GM12878 (cell line): ENCODE measurements at regions of chr1 and their contacts with region 1.

Region 1: GRCh38 chr1:11645670-11646265 is 8.5 kb downstream of the FBXO2 start:
- DNase-seq: no peak
- ATAC-seq: peak; percentile 79
- H3K4me3 ChIP-seq: no peak overlapping the region
- H3K27ac ChIP-seq: no peak overlapping the region
- H3K4me1 ChIP-seq: no peaks in the 10 kb centered on the region
- H3K27me3 ChIP-seq: no peaks in the 10 kb centered on the region; a peak in 2 of 4 replicates
- CTCF ChIP-seq: peak; percentile 73 to 85 (median 78)
- EP300 ChIP-seq: no peak
- POLR2A ChIP-seq: no peak
- RAD21 ChIP-seq: peak; percentile 73

Region 2: DNA sequence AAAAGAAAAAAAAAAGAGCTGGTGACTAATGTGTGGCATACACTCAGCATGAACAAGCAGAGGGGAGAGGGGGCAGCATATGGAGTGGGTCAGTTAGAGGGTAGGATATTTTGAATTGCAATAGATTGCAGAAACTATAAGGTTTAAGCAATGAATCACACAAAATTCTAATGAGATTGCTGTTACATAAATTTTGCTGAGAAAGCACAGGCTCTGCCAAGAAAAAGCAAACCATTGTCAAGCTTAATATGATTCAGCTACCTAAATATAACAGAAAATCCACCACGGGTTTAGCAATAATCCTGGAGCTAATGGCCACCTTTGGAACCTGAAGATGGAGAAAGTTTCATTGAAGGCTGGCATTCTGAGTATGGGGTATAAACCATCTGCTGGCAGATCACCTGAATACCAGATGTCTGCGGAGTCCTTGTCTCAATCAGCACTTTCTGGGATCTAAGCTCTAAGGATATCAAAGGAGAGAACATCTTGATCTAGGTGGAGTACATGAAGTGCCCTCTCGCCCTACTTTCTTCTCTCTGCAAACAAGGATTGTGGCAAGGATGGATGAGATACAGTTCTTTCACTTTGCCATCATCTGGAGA is 486.9 kb before region 1 on chr1:
- CTCF ChIA-PET with region 1: no interaction called
- POLR2A ChIA-PET with region 1: no interaction called
- RAD21 ChIA-PET with region 1: no interaction called
- SMC1A ChIA-PET with region 1: no interaction called
- in situ Hi-C with region 1: no loop called
- intact Hi-C with region 1: no loop called
- DNase-seq: no peak
- ATAC-seq: no peak
- H3K4me3 ChIP-seq: no peak overlapping the region
- H3K27ac ChIP-seq: no peak overlapping the region
- H3K4me1 ChIP-seq: no peaks in the 10 kb centered on the region
- H3K27me3 ChIP-seq: no peaks in the 10 kb centered on the region
- CTCF ChIP-seq: no peak
- EP300 ChIP-seq: no peak
- POLR2A ChIP-seq: no peak
- RAD21 ChIP-seq: no peak

Region 3: DNA sequence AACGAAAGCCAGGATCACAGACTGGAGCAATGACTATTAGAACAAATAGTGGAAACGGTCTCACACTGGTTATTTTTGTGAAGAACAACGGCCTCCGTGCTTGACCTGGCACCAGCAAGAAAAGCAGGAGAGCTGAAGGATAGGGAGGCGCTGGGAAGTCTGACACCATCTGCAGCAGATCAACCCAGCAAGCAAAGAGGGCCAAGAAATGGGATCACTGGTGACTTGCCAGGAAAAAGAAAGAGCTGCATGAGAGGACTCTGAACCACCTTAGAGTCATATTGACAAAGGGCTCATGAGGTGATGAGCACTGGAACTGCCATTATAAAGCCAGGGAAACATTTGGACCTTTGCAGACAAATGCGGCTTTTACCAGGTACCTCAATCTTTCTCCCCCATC is 408.4 kb before region 1 on chr1:
- CTCF ChIA-PET with region 1: interaction called, 47 read pairs
- POLR2A ChIA-PET with region 1: no interaction called
- RAD21 ChIA-PET with region 1: interaction called, 11 read pairs
- SMC1A ChIA-PET with region 1: interaction called, 5 read pairs
- in situ Hi-C with region 1: loop called (anchors 5 kb)
- intact Hi-C with region 1: loop called (anchors 1 kb)
- DNase-seq: no peak
- ATAC-seq: no peak
- H3K4me3 ChIP-seq: no peak overlapping the region
- H3K27ac ChIP-seq: no peak overlapping the region
- H3K4me1 ChIP-seq: peaks cover 3% of the 10 kb centered on the region; the same call in 1 of the 2 replicates
- H3K27me3 ChIP-seq: no peaks in the 10 kb centered on the region
- CTCF ChIP-seq: no peak
- EP300 ChIP-seq: no peak
- POLR2A ChIP-seq: no peak
- RAD21 ChIP-seq: no peak

Region 4: DNA sequence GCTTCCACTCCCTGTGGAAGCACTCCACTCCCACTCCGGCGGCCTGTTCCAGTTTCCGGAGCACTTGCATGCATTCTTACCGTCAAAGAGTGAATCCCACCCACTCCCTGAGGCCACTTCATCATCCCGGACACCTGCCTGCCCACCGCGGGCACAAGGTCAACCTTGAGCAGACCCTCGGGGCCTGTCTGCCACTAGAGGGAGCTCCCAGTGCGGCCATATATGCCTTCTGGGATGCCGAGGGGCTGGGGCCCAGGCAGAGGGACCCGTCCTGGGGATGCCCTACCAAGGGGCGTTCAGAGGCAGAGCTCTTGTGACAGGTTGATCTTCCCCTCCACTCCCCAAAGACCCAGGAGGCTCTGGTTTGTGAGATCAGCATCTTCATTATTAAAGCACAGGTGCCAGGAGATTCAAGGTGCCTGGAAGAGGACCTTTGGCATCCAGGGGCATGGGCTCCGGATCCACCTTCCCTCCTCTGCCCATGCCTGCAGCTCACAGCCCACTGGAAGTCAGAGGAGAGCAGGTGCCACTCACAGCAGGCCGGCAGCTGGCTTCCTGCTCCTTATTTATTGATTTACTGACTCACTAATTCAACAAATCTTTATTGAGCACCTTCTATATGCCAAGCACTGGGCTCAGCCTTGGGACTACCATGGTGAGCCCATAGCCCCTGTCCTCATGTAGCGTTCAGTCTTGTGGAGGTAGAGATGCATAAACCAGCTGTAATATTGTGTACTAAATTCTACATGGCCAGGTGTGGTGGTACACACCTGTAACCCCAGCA is 325.4 kb before region 1 on chr1:
- CTCF ChIA-PET with region 1: interaction called, 5 read pairs
- POLR2A ChIA-PET with region 1: no interaction called
- RAD21 ChIA-PET with region 1: interaction called, 5 read pairs
- SMC1A ChIA-PET with region 1: no interaction called
- in situ Hi-C with region 1: loop called (anchors 5 kb)
- intact Hi-C with region 1: loop called (anchors 1 kb)
- DNase-seq: no peak
- ATAC-seq: peak; percentile 90
- H3K4me3 ChIP-seq: no peak overlapping the region
- H3K27ac ChIP-seq: no peak overlapping the region
- H3K4me1 ChIP-seq: no peaks in the 10 kb centered on the region
- H3K27me3 ChIP-seq: peaks cover 0 to 2% of the 10 kb centered on the region in 2 experiments; a peak in 2 of 4 replicates
- CTCF ChIP-seq: peak; percentile 70 to 80 (median 77)
- EP300 ChIP-seq: no peak
- POLR2A ChIP-seq: no peak
- RAD21 ChIP-seq: peak; percentile 74

Region 5: DNA sequence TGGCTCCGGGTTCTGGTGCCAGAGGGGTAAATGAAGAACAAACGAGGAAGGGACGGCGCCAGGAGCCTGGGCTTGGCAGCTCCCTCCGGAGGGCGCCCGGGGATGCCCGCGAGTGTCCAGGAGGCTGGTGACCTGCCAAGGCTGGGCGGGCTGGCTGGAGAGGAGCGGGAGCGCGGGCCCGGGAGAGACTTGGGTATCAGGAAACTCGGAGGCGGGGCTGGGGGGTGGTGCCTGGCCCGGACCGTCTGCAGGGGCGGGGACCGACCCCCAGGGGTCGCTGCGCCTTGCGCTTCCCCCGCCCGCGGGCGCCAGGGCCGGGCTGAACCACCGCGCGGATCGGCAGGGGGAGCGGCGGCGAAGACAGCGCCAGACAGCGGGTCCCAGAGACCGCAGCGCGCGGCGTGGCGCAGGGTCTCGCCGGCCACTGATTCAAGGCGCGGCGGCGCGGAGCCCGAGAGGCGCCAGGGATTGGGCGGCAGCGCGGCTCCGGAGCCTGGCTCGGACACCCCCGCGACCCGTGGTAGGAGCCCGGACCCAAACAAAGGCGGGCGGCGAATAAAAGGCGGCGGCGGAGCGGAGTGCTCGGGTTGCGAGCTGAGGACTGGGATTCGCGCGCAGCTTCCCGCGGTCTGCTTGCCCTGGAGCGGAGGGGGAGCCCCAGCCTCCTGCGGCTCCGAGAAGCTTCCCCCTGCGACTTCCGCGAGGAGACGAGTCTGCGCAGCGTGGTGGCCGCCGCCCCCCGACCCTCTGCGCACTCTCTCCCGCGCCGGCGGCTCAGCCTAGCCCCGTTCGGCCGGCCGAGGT is 167.0 kb before region 1 on chr1 and contains the start of gene DISP3:
- CTCF ChIA-PET with region 1: interaction called, 6 read pairs
- POLR2A ChIA-PET with region 1: no interaction called
- RAD21 ChIA-PET with region 1: no interaction called
- SMC1A ChIA-PET with region 1: no interaction called
- in situ Hi-C with region 1: no loop called
- intact Hi-C with region 1: loop called (anchors 5 kb)
- DNase-seq: peak; percentile 1
- ATAC-seq: peak; percentile 95
- H3K4me3 ChIP-seq: peak within 1 kb of the TSS; percentile 72; the same call in 1 of the 2 replicates
- H3K27ac ChIP-seq: no peak within 1 kb of the TSS
- H3K4me1 ChIP-seq: no peaks in the 10 kb centered on the region
- H3K27me3 ChIP-seq: peaks cover 2 to 4% of the 10 kb centered on the region in 2 experiments; a peak in 1 of 4 replicates
- CTCF ChIP-seq: peak; percentile 62 to 69 (median 69)
- EP300 ChIP-seq: no peak
- POLR2A ChIP-seq: peak; percentile 86
- RAD21 ChIP-seq: 0 out of 2 replicates have a peak, but pooled peaks have one; percentile 13
- polyA plus RNA-seq, gene DISP3: not detected

Region 6: DNA sequence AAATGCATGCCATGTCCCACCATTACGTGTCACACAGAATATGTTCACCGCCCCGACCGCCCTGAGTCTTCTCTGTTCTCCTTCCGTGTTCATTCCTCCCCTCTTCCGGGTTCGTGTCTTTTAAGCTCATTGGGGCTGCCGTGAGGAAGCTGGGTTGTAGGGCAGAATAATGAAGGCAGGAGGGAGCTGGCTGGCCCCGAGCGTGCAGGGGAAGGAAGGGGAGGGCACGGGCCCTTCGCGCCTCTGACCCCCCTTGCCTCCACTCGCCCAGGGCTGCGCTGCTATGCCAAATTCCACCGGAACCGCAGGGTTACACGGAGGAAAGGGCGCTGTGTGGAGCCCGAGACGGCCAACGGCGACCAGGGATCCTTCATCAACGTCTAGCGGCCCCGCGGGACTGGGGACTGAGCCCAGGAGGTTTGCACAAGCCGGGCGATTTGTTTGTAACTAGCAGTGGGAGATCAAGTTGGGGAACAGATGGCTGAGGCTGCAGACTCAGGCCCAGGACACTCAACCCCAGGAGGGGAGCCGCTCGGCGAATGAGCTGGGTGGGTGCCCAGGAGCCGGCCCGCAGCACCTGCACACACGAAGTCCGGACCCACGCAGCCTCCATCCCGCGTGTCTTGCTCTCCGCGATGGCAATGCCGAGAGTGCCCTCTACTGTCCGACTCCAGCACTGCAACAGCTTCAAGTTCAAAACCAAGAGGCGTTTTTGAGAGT is 73.7 kb after region 1 on chr1:
- CTCF ChIA-PET with region 1: interaction called, 36 read pairs
- POLR2A ChIA-PET with region 1: no interaction called
- RAD21 ChIA-PET with region 1: interaction called, 25 read pairs
- SMC1A ChIA-PET with region 1: interaction called, 5 read pairs
- in situ Hi-C with region 1: no loop called
- intact Hi-C with region 1: loop called (anchors 1 kb)
- DNase-seq: no peak
- ATAC-seq: peak; percentile 91
- H3K4me3 ChIP-seq: peak overlapping the region; percentile 57; the same call in 1 of the 2 replicates
- H3K27ac ChIP-seq: no peak overlapping the region
- H3K4me1 ChIP-seq: peaks cover 5% of the 10 kb centered on the region; the same call in 1 of the 2 replicates
- H3K27me3 ChIP-seq: no peaks in the 10 kb centered on the region
- CTCF ChIP-seq: peak; percentile 91 to 98 (median 97)
- EP300 ChIP-seq: no peak
- POLR2A ChIP-seq: peak; percentile 53; the same call in 1 of the 2 replicates
- RAD21 ChIP-seq: peak; percentile 91